Calu3 (cell line): ENCODE measurements at regions of chr4 and their contacts with region 1.

Region 1: DNA sequence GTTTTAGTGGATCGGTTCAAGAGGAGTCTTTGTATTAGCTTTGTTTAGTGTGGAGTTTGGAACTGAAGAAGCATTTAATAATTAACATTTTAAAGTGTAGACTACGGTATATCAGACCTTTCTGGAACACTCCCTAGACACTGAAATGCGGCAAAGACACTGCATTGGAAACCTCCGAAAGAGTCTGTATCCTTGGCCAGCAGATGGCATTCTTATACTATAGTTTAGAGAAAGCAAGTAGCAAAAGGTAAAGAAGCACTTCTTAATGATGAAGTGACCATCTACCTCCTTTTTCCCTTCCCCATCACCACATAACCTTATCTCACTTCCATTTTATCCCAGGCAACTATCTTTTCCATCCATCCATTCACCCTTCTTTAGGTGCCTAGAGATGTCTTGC is 7.6 kb downstream of the FABP2 start:
- DNase-seq: no peak
- H3K4me3 Mint-ChIP-seq: no peak overlapping the region
- H3K27ac Mint-ChIP-seq: no peak overlapping the region
- H3K4me1 Mint-ChIP-seq: no peaks in the 10 kb centered on the region
- H3K27me3 Mint-ChIP-seq: no peaks in the 10 kb centered on the region
- CTCF ChIP-seq: no peak

Region 2: GRCh38 chr4:119490335-119490734 is 176.0 kb after region 1 on chr4:
- CTCF ChIA-PET with region 1: no interaction called
- intact Hi-C with region 1: loop called (anchors 2 kb)
- DNase-seq: no peak
- H3K4me3 Mint-ChIP-seq: no peak overlapping the region
- H3K27ac Mint-ChIP-seq: no peak overlapping the region
- H3K4me1 Mint-ChIP-seq: no peaks in the 10 kb centered on the region
- H3K27me3 Mint-ChIP-seq: no peaks in the 10 kb centered on the region
- CTCF ChIP-seq: no peak

Region 3: GRCh38 chr4:119585771-119586170 is 271.4 kb after region 1 on chr4:
- CTCF ChIA-PET with region 1: no interaction called
- intact Hi-C with region 1: no loop called
- DNase-seq: no peak
- H3K4me3 Mint-ChIP-seq: no peak overlapping the region
- H3K27ac Mint-ChIP-seq: no peak overlapping the region
- H3K4me1 Mint-ChIP-seq: no peaks in the 10 kb centered on the region
- H3K27me3 Mint-ChIP-seq: no peaks in the 10 kb centered on the region
- CTCF ChIP-seq: no peak

Region 4: GRCh38 chr4:119604266-119604665 is 289.9 kb after region 1 on chr4:
- CTCF ChIA-PET with region 1: no interaction called
- intact Hi-C with region 1: loop called (anchors 10 kb)
- DNase-seq: no peak
- H3K4me3 Mint-ChIP-seq: no peak overlapping the region
- H3K27ac Mint-ChIP-seq: no peak overlapping the region
- H3K4me1 Mint-ChIP-seq: peaks cover 11% of the 10 kb centered on the region
- H3K27me3 Mint-ChIP-seq: no peaks in the 10 kb centered on the region
- CTCF ChIP-seq: no peak